ENCODE measurements at regions of chr2 and their contacts with region 1.

Region 1: DNA sequence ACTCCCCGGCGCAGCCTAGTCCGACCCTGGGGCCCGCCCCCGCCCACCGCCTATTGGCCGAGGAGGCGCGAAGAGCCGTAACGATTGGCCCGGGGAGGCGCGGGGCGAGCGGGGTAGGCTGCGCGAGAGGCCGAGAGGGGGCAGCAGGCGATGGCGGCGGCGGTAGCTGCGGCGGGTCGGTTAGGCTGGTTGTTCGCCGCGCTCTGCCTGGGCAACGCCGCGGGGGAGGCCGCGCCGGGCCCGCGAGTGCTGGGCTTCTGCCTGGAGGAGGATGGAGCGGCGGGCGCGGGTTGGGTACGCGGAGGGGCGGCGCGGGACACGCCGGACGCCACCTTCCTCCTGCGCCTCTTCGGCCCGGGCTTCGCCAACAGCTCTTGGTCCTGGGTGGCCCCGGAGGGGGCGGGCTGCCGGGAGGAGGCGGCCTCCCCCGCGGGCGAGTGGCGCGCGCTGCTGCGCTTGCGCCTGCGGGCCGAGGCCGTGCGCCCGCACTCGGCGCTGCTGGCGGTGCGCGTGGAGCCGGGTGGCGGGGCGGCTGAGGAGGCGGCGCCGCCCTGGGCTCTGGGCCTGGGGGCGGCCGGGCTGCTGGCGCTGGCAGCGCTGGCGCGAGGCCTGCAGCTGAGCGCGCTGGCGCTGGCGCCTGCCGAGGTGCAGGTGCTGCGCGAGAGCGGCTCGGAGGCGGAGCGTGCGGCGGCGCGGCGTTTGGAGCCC is at the start of gene CNNM3:
- DNase-seq: peak; percentile 97 to 99
- H3K4me3 ChIP-seq: peak within 1 kb of the TSS; percentile 96
- H3K4me3 Mint-ChIP-seq: peak within 1 kb of the TSS; percentile 84
- H3K27ac Mint-ChIP-seq: peak within 1 kb of the TSS; percentile 42
- H3K4me1 ChIP-seq: peaks cover 32% of the 10 kb centered on the region
- H3K4me1 Mint-ChIP-seq: peaks cover 42% of the 10 kb centered on the region
- H3K27me3 ChIP-seq: no peaks in the 10 kb centered on the region
- H3K27me3 Mint-ChIP-seq: no peaks in the 10 kb centered on the region
- CTCF ChIP-seq: peak; percentile 60 to 72
- total RNA-seq, gene CNNM3: 62.5 and 69.1 TPM in 2 replicates

Region 2: GRCh38 chr2:96531872-96532704 is 284.2 kb before region 1 on chr2:
- CTCF ChIA-PET with region 1: no interaction called
- POLR2A ChIA-PET with region 1: no interaction called
- intact Hi-C with region 1: no loop called
- DNase-seq: peak in 1 of 2 experiments; percentile 43
- H3K4me3 ChIP-seq: no peak overlapping the region
- H3K4me3 Mint-ChIP-seq: peak overlapping the region; percentile 54
- H3K27ac Mint-ChIP-seq: no peak overlapping the region
- H3K4me1 ChIP-seq: no peaks in the 10 kb centered on the region
- H3K4me1 Mint-ChIP-seq: peaks cover 5% of the 10 kb centered on the region
- H3K27me3 ChIP-seq: no peaks in the 10 kb centered on the region
- H3K27me3 Mint-ChIP-seq: no peaks in the 10 kb centered on the region
- CTCF ChIP-seq: no peak

Region 3: GRCh38 chr2:96638144-96639121 is 177.8 kb before region 1 on chr2 and contains the start of gene KANSL3:
- CTCF ChIA-PET with region 1: no interaction called
- POLR2A ChIA-PET with region 1: no interaction called
- intact Hi-C with region 1: loop called (anchors 5 kb)
- DNase-seq: peak; percentile 88 to 96
- H3K4me3 ChIP-seq: peak within 1 kb of the TSS; percentile 69
- H3K4me3 Mint-ChIP-seq: peak within 1 kb of the TSS; percentile 81
- H3K27ac Mint-ChIP-seq: peak within 1 kb of the TSS; percentile 94
- H3K4me1 ChIP-seq: no peaks in the 10 kb centered on the region
- H3K4me1 Mint-ChIP-seq: peaks cover 12% of the 10 kb centered on the region
- H3K27me3 ChIP-seq: no peaks in the 10 kb centered on the region
- H3K27me3 Mint-ChIP-seq: no peaks in the 10 kb centered on the region
- CTCF ChIP-seq: no peak
- total RNA-seq, gene KANSL3: 47.4 and 48.6 TPM in 2 replicates

Region 4: DNA sequence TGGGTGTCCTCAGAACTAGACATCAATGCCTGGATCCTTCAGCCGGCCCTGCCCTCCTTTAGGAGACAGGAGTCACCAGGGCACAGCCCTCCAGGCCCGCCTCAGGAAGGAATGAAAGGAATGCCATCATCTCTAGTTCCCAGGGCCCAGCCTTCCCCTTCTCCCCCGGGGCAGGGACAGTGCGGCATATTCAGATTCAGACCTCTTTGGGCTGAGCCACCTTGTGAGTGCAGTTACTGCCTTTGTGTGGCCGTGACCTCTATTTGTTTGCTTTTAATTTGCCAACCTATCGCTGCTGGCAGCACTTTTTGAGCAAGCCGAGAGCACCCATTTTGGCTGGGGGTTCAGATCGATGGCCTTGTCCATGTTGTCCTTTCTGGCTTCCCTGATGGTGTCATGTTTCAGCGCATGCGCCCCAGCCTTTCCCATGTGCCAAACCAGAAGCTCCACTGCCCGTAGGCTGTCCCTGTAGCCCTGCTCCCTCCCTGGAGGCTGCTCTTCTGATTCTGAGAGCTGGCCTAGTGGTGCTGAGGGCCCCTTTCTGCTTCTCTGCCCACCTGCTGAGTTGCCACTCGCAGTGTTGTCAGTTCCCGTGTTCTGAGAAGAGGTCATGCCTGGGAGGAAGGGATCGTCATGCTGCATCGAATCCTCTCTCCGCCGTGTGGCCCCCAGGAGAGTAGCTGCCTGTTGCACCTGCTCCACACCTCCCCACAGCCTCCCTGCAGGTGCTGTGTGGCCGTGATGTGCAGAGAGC is 16.6 kb after region 1 on chr2:
- CTCF ChIA-PET with region 1: interaction called, 6 read pairs
- POLR2A ChIA-PET with region 1: interaction called, 3 read pairs
- intact Hi-C with region 1: loop called (anchors 1 kb)
- DNase-seq: peak; percentile 87 to 92
- H3K4me3 ChIP-seq: no peak overlapping the region
- H3K4me3 Mint-ChIP-seq: peak overlapping the region; percentile 65
- H3K27ac Mint-ChIP-seq: peak overlapping the region; percentile 95
- H3K4me1 ChIP-seq: peaks cover 34% of the 10 kb centered on the region
- H3K4me1 Mint-ChIP-seq: peaks cover 52% of the 10 kb centered on the region
- H3K27me3 ChIP-seq: no peaks in the 10 kb centered on the region
- H3K27me3 Mint-ChIP-seq: no peaks in the 10 kb centered on the region
- CTCF ChIP-seq: no peak

Region 5: DNA sequence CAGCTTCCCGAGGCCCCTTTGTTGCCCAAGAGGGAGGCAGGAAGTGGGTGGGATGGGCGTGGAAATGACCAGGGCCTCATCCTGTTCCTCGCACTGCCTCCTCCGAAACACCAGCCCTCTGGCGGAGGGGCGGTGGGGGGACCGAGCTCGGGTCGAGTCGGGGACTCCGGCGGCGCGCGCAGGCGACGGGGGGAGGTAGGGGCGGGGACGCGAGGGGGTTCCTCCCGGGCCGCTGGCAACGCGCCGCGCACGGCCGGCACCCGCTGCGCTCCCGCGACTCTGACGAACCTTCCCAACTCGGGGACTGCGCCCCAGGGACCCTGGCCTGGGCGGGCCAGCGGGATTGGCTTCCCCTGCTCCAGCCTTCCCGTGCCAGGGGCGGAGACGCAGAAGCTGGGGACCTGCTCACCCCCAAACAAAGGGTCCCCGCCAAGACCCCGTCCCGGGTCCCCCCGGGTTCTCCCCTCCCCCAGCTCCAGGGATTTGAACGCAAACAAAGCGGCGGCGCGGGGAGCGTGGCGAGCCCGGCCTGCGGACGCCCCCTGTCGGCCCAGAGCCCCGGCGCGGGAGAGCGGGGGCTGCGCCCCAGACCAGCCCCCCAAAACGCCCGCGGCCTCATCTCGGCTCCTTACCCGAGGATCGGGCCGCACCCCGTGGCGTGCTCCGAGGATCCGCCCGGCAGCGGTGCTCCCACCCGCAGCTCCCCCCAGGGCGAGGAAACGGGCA is 52.4 kb after region 1 on chr2:
- CTCF ChIA-PET with region 1: interaction called, 6 read pairs
- POLR2A ChIA-PET with region 1: interaction called, 10 read pairs
- intact Hi-C with region 1: loop called (anchors 2 kb)
- DNase-seq: peak; percentile 92
- H3K4me3 ChIP-seq: peak overlapping the region; percentile 95
- H3K4me3 Mint-ChIP-seq: peak overlapping the region; percentile 78
- H3K27ac Mint-ChIP-seq: peak overlapping the region; percentile 75
- H3K4me1 ChIP-seq: peaks cover 19% of the 10 kb centered on the region
- H3K4me1 Mint-ChIP-seq: no peaks in the 10 kb centered on the region
- H3K27me3 ChIP-seq: no peaks in the 10 kb centered on the region
- H3K27me3 Mint-ChIP-seq: no peaks in the 10 kb centered on the region
- CTCF ChIP-seq: peak; percentile 39 to 84

Region 6: GRCh38 chr2:96951093-96951654 is 134.9 kb after region 1 on chr2:
- CTCF ChIA-PET with region 1: no interaction called
- POLR2A ChIA-PET with region 1: no interaction called
- intact Hi-C with region 1: loop called (anchors 5 kb)
- DNase-seq: peak; percentile 85 to 92
- H3K4me3 ChIP-seq: no peak overlapping the region
- H3K4me3 Mint-ChIP-seq: no peak overlapping the region
- H3K27ac Mint-ChIP-seq: no peak overlapping the region
- H3K4me1 ChIP-seq: no peaks in the 10 kb centered on the region
- H3K4me1 Mint-ChIP-seq: no peaks in the 10 kb centered on the region
- H3K27me3 ChIP-seq: no peaks in the 10 kb centered on the region
- H3K27me3 Mint-ChIP-seq: no peaks in the 10 kb centered on the region
- CTCF ChIP-seq: peak; percentile 96 to 97

Measured in Caco-2 (cell line).